ENCODE measurements at regions of chr19 and their contacts with region 1.

Region 1: DNA sequence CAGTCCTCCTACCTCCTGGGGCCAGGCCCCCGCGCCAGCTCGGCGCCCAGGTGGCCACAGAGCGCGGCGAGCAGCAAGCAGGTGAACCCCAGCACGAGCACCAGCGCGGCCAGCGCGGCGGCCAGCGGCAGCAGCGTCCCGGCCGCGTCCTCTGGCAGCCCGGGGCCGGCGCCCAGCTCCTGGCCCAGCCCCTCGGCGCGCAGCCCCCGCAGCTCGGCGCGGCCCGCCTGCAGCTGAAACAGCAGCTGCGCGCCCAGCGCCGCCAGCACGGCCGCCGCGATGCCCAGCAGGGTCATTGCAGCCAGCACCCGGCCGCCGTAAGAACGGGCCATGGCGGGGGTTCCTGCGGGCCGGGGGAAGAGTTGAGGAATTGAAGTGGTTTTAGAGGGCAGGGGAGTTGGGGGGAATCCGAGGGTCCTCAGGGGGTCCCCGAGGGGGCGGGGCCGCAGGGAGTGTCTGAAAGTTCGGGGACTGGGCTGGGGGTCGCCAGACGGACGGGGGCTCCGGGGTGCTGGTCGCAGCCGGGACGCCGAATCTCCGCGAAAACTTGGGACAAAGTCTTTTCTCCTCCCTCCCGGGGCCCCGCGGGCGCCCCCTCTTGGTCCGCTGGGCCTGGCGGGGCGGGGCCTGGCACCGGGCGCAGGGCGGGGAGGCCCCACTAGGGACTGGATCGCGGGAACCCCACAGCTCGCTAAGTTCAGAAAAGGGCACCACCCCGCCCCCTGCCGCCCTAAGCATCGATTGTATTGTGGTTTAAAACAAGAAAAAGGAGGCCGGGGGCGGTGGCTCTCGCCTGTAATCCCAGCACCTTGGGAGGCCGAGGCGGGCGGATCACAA is at the start of gene TMEM221:
- DNase-seq: peak; percentile 28
- H3K4me3 Mint-ChIP-seq: no peak within 1 kb of the TSS
- H3K27ac Mint-ChIP-seq: no peak within 1 kb of the TSS
- H3K4me1 Mint-ChIP-seq: peaks cover 13% of the 10 kb centered on the region
- H3K27me3 Mint-ChIP-seq: peaks cover 14% of the 10 kb centered on the region
- total RNA-seq, gene TMEM221: not detected in 2 replicates

Region 2: GRCh38 chr19:17292286-17293097 is 155.9 kb before region 1 on chr19:
- intact Hi-C with region 1: no loop called
- DNase-seq: peak; percentile 69
- H3K4me3 Mint-ChIP-seq: peak overlapping the region; percentile 85
- H3K27ac Mint-ChIP-seq: peak overlapping the region; percentile 87
- H3K4me1 Mint-ChIP-seq: no peaks in the 10 kb centered on the region
- H3K27me3 Mint-ChIP-seq: no peaks in the 10 kb centered on the region

Region 3: DNA sequence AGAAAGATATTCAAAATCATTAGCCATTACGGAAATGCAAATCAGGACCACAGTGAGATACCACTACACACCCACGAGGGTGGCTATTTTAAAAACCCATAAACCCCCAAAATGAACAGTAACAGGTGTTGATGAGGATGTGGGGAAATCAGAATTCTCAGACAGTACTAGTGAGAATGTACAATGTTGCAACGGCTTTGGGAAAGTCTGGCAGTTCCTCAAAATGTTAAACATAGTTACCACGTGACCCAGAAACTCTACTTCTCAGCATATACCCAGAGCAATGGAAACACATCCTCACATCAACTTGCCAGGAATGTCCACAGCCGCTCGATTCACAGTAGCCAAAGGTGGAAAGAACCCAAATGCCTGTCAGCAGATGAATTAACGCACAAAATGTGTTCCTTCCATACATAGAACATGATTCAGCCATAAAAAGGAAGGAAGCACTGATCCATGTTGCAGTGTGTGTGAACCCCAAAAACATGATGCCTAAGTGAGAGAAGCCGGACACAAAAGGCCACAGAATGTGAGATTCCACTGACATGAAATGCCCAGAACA is 78.2 kb before region 1 on chr19:
- intact Hi-C with region 1: no loop called
- DNase-seq: no peak
- H3K4me3 Mint-ChIP-seq: no peak overlapping the region
- H3K27ac Mint-ChIP-seq: no peak overlapping the region
- H3K4me1 Mint-ChIP-seq: no peaks in the 10 kb centered on the region
- H3K27me3 Mint-ChIP-seq: peaks cover 3% of the 10 kb centered on the region

Region 4: GRCh38 chr19:17555480-17555928 is 107.2 kb after region 1 on chr19 and contains the start of gene COLGALT1:
- intact Hi-C with region 1: loop called (anchors 5 kb)
- DNase-seq: peak; percentile 97
- H3K4me3 Mint-ChIP-seq: peak within 1 kb of the TSS; percentile 86
- H3K27ac Mint-ChIP-seq: peak within 1 kb of the TSS; percentile 70
- H3K4me1 Mint-ChIP-seq: peaks cover 15% of the 10 kb centered on the region
- H3K27me3 Mint-ChIP-seq: no peaks in the 10 kb centered on the region
- total RNA-seq, gene COLGALT1: 115 and 117 TPM in 2 replicates